Panc1 (cell line): ENCODE measurements at regions of chr5 and their contacts with region 1.

Region 1: DNA sequence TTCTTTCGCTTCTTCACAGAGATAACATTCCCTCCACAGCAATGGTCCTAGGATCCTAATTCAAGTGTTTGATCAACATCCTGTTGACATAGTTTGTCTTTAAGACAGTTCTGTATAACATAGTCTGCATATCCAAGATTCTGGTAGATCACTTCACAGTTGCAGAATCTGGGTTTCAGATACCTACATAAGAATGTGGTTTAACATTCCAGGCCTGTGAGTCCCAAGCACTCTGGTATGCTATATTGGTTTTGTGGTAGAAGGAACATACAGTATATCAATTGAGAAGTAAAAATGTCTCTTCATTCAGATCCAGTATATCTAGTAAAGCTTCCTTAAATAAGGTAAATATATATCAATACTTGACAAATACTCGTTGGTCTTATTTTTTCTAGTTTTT is 914.2 kb upstream of the CDH6 start:
- DNase-seq: peak; percentile 35
- ATAC-seq: peak; percentile 62; the same call in 1 of the 2 replicates
- H3K4me3 ChIP-seq: no peak overlapping the region
- H3K27ac ChIP-seq: no peak overlapping the region
- H3K4me1 ChIP-seq: no peaks in the 10 kb centered on the region
- H3K27me3 ChIP-seq: no peaks in the 10 kb centered on the region
- CTCF ChIP-seq: no peak

Region 2: GRCh38 chr5:29367176-29367833 is 911.9 kb before region 1 on chr5:
- CTCF ChIA-PET with region 1: interaction called, 12 read pairs
- POLR2A ChIA-PET with region 1: no interaction called
- in situ Hi-C with region 1: no loop called
- intact Hi-C with region 1: no loop called
- DNase-seq: no peak
- ATAC-seq: no peak; the same call in 1 of the 2 replicates
- H3K4me3 ChIP-seq: no peak overlapping the region
- H3K27ac ChIP-seq: no peak overlapping the region
- H3K4me1 ChIP-seq: no peaks in the 10 kb centered on the region
- H3K27me3 ChIP-seq: no peaks in the 10 kb centered on the region
- CTCF ChIP-seq: peak; percentile 42; the same call in 1 of the 2 replicates

Region 3: DNA sequence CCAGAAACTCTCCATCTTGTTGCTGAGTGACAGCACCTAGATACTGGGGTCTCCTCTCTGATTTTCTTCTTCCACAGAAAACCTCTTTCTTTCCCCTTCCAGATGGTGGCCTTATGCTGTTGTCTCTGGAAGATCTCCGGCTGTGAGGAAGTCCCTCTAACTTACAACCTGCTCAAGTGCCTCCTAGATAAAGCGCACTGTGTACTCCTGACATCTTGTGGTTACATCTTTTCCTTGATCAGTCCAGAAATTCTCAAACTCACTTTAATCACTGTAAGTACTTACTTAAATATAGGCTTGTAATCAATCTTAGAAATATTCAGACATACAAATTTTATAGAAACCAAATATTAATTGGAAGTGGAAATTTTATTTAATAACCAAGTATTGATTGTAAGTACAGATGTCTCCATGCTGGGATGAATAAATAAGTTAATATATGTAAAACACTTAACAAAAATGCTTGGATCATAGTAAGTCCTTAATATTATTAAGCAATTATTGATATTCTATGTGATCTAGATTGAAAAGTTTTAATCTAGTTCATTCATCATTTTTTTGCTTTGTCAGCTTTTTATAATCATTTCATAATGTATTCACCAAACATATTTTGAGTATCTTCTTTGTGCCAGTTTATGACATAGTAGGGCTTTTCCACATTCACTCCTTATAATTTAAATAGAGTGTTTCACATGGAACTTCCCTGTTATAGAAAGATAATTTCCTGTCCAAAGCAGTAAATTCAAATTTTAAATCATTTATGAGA is 467.1 kb before region 1 on chr5:
- CTCF ChIA-PET with region 1: no interaction called
- POLR2A ChIA-PET with region 1: no interaction called
- in situ Hi-C with region 1: no loop called
- intact Hi-C with region 1: no loop called
- DNase-seq: no peak
- ATAC-seq: no peak
- H3K4me3 ChIP-seq: no peak overlapping the region
- H3K27ac ChIP-seq: no peak overlapping the region
- H3K4me1 ChIP-seq: no peaks in the 10 kb centered on the region
- H3K27me3 ChIP-seq: no peaks in the 10 kb centered on the region
- CTCF ChIP-seq: no peak; the same call in 1 of the 2 replicates

Region 4: GRCh38 chr5:30667292-30667691 is 388.1 kb after region 1 on chr5:
- CTCF ChIA-PET with region 1: no interaction called
- POLR2A ChIA-PET with region 1: no interaction called
- in situ Hi-C with region 1: no loop called
- intact Hi-C with region 1: no loop called
- DNase-seq: no peak
- ATAC-seq: no peak
- H3K4me3 ChIP-seq: no peak overlapping the region
- H3K27ac ChIP-seq: no peak overlapping the region
- H3K4me1 ChIP-seq: no peaks in the 10 kb centered on the region
- H3K27me3 ChIP-seq: no peaks in the 10 kb centered on the region
- CTCF ChIP-seq: no peak

Region 5: DNA sequence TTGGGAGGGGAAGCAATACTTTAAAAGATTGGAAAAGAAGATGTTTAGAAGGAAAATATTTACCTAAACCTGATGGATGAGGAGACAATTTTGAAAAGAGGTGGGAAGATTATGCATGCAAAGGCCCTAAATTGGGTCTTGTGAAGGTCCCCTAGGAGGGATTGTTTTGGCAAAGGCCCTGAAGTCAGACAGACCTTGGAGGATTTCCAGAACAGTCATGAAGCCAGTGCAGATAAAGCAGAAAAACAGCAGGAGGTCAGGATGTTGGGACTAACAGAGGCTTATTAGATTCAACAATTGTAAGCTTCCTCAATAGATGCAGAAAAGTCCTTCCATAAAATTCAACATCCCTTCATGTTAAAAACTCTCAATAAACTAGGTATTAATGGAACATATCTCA is 553.3 kb after region 1 on chr5:
- CTCF ChIA-PET with region 1: no interaction called
- POLR2A ChIA-PET with region 1: no interaction called
- in situ Hi-C with region 1: no loop called
- intact Hi-C with region 1: no loop called
- DNase-seq: no peak
- ATAC-seq: no peak
- H3K4me3 ChIP-seq: no peak overlapping the region
- H3K27ac ChIP-seq: no peak overlapping the region
- H3K4me1 ChIP-seq: no peaks in the 10 kb centered on the region
- H3K27me3 ChIP-seq: no peaks in the 10 kb centered on the region
- CTCF ChIP-seq: no peak